Activated T-helper 2 cell treated with anti-CD3 and anti-CD28 coated beads, Interferon-gamma antibody, Interleukin-2, Interleukin-4, amounts not matched to agents 10 μg/mL and 5 μg/mL and 100 μg/mL, durations not matched to agents 14 hours and 24 hours and 36 hours (primary cell): ENCODE measurements at regions of chr9 and their contacts with region 1.

Region 1: GRCh38 chr9:33415501-33416038 is 13.2 kb upstream of the AQP7 start:
- DNase-seq: peak; percentile 93
- H3K4me3 Mint-ChIP-seq: no peak overlapping the region
- H3K27ac Mint-ChIP-seq: peak overlapping the region; percentile 92
- H3K4me1 Mint-ChIP-seq: peaks cover 34% of the 10 kb centered on the region
- H3K27me3 Mint-ChIP-seq: peaks cover 4% of the 10 kb centered on the region

Region 2: GRCh38 chr9:33202552-33203201 is 212.9 kb before region 1 on chr9:
- intact Hi-C with region 1: no loop called
- DNase-seq: peak; percentile 27
- H3K4me3 Mint-ChIP-seq: no peak overlapping the region
- H3K27ac Mint-ChIP-seq: peak overlapping the region; percentile 16
- H3K4me1 Mint-ChIP-seq: peaks cover 12% of the 10 kb centered on the region
- H3K27me3 Mint-ChIP-seq: peaks cover 11% of the 10 kb centered on the region

Region 3: DNA sequence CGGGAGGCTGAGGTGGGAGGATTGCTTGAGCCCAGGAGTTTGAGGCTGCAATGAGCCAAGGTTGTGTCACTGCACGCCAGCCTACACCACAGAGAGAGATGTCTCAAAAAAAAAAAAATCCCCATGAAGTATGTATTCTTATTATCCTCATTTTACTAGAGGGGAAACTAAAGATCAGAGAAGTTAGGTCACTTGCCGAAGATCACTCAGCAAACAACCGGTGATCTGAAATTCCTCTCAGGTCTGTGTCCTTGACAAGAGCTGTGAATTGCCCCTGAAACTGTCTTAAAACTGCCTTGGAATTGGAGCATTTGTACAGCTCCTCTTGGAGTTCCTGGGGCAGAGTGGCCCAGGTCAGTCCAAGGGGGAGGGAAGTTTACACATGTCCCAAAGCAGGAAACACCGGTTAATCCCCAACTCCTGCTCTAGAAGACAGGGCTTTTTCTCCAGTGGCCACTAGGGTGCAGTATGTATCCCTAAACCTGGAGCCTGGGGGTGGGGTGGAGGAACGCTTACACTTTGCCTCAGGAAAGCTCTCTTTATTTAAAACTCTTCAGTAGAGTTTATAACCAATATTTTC is 40.8 kb before region 1 on chr9:
- intact Hi-C with region 1: loop called (anchors 2 kb)
- DNase-seq: peak; percentile 57
- H3K4me3 Mint-ChIP-seq: no peak overlapping the region
- H3K27ac Mint-ChIP-seq: peak overlapping the region; percentile 39
- H3K4me1 Mint-ChIP-seq: peaks cover 10% of the 10 kb centered on the region
- H3K27me3 Mint-ChIP-seq: no peaks in the 10 kb centered on the region

Region 4: GRCh38 chr9:33446946-33447798 is 31.6 kb after region 1 on chr9 and contains the start of gene AQP3:
- intact Hi-C with region 1: loop called (anchors 1 kb)
- DNase-seq: peak; percentile 75
- H3K4me3 Mint-ChIP-seq: peak within 1 kb of the TSS; percentile 81
- H3K27ac Mint-ChIP-seq: peak within 1 kb of the TSS; percentile 79
- H3K4me1 Mint-ChIP-seq: peaks cover 26% of the 10 kb centered on the region
- H3K27me3 Mint-ChIP-seq: no peaks in the 10 kb centered on the region
- total RNA-seq, gene AQP3: 2.1 TPM in 2 replicates

Region 5: GRCh38 chr9:33458444-33458843 is 42.9 kb after region 1 on chr9:
- intact Hi-C with region 1: loop called (anchors 1 kb)
- DNase-seq: peak; percentile 35
- H3K4me3 Mint-ChIP-seq: no peak overlapping the region
- H3K27ac Mint-ChIP-seq: peak overlapping the region; percentile 88
- H3K4me1 Mint-ChIP-seq: peaks cover 44% of the 10 kb centered on the region
- H3K27me3 Mint-ChIP-seq: no peaks in the 10 kb centered on the region